ENCODE measurements at regions of chr2 and their contacts with region 1.

Region 1: GRCh38 chr2:62340994-62341484 is 145.1 kb downstream of the B3GNT2 start:
- DNase-seq: peak; percentile 46 to 48
- ATAC-seq: peak in 7 of 8 donors; percentile 51 to 99 (median 91)
- H3K4me3 ChIP-seq: no peak overlapping the region
- H3K27ac ChIP-seq: peak overlapping the region in 8 of 10 donors; percentile 1 to 59 (median 44)
- H3K4me1 ChIP-seq: peaks cover 0 to 35% (median 15%) of the 10 kb centered on the region in 9 donors
- H3K27me3 ChIP-seq: no peaks in the 10 kb centered on the region
- CTCF ChIP-seq: no peak

Region 2: DNA sequence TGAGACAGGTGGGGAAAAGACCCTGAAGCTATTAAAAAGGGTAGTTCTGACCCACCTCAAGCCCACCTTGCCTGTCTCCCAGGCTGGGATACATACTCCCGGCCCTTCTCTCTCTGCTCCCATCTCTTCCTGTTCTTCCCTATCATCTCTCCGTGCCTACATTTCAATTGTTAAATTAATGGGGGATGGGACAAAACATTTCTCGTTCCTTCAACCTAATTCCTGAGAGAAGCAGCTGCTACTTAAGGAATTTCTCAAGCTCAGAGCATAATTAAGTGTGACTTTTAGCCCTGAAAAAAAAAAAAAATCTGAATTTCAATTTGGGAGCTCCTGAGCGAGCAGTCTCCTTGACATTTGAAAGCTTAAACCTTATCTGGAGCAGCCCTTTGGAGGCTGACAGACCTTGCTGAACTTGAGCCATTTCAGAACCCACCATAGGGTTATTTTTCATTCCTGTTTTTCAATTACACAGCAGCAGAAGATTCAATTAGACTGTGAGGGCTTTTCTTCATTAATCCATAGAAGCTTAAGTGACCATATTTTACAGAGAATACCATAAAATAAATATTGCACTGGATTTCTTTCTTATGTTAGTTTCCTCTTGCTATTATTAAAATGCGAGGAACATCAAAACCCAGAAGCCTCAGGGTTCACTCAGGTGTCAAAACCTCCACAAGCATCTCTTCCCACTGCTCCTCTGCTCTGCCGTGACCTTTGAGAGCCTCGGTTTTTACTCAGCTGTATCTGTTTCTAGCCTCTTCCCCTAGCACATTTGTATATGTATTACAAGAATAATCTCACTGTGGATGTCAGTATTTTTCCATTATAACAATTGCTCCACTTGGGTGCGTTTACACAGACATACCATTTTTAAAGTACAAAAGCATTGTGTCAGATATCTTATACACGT is 19.4 kb before region 1 on chr2:
- intact Hi-C with region 1: loop called in 1 of 10 experiments (anchors 1 kb)
- DNase-seq: no peak
- ATAC-seq: no peak
- H3K4me3 ChIP-seq: no peak overlapping the region
- H3K27ac ChIP-seq: no peak overlapping the region
- H3K4me1 ChIP-seq: no peaks in the 10 kb centered on the region
- H3K27me3 ChIP-seq: no peaks in the 10 kb centered on the region
- CTCF ChIP-seq: no peak

Region 3: GRCh38 chr2:62398356-62398755 is 57.3 kb after region 1 on chr2:
- intact Hi-C with region 1: no loop called
- DNase-seq: no peak
- ATAC-seq: no peak
- H3K4me3 ChIP-seq: no peak overlapping the region
- H3K27ac ChIP-seq: no peak overlapping the region
- H3K4me1 ChIP-seq: no peaks in the 10 kb centered on the region
- H3K27me3 ChIP-seq: no peaks in the 10 kb centered on the region
- CTCF ChIP-seq: no peak

Measured in heart right ventricle (tissue), 16 donors.